Left cardiac atrium (tissue), 4 donors: ENCODE measurements at regions of chr6 and their contacts with region 1.

Region 1: GRCh38 chr6:47235964-47236760 is 73.5 kb downstream of the TNFRSF21 start:
- DNase-seq: peak; percentile 40
- ATAC-seq: peak; percentile 82 to 87

Region 2: GRCh38 chr6:47103931-47104330 is 132.2 kb before region 1 on chr6:
- intact Hi-C with region 1: loop called in 1 of 2 experiments (anchors 5 kb)
- DNase-seq: no peak
- ATAC-seq: peak in 1 of 2 donors; percentile 65